Activated B cell treated with CpG ODN at 0.5 μM for 24 hours (primary cell): ENCODE measurements at regions of chr11 and their contacts with region 1.

Region 1: GRCh38 chr11:128290106-128290840 is 297.1 kb downstream of the ETS1 start:
- DNase-seq: peak; percentile 67
- ATAC-seq: peak; percentile 75
- H3K4me3 Mint-ChIP-seq: peak overlapping the region; percentile 85
- H3K27ac Mint-ChIP-seq: peak overlapping the region; percentile 99
- H3K4me1 Mint-ChIP-seq: peaks cover 97% of the 10 kb centered on the region
- H3K27me3 Mint-ChIP-seq: no peaks in the 10 kb centered on the region
- CTCF ChIP-seq: no peak

Region 2: DNA sequence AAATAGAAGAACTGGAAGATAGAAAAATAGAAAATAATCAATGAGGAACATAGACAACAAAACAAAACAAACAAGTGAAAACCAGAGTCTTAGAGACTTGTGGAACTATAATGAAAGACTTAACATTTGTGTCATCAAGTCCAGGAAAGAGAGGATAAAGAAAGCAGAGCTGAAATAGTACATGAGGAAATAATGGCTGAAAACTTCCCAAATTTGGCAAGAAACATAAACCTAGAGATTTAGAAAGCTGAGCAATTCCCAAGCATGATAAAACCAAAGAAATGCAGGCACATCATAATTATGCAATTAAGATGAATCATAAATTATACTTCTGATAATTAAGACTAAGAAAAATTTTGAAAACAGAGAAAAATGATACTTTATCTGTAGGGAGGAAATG is 317.5 kb before region 1 on chr11:
- CTCF ChIA-PET with region 1: no interaction called
- POLR2A ChIA-PET with region 1: no interaction called
- intact Hi-C with region 1: no loop called
- DNase-seq: no peak
- ATAC-seq: no peak
- H3K4me3 Mint-ChIP-seq: no peak overlapping the region
- H3K27ac Mint-ChIP-seq: no peak overlapping the region
- H3K4me1 Mint-ChIP-seq: no peaks in the 10 kb centered on the region
- H3K27me3 Mint-ChIP-seq: peaks cover 8% of the 10 kb centered on the region
- CTCF ChIP-seq: no peak

Region 3: GRCh38 chr11:128172046-128172878 is 118.0 kb before region 1 on chr11:
- CTCF ChIA-PET with region 1: interaction called, 16 read pairs
- POLR2A ChIA-PET with region 1: interaction called, 4 read pairs
- intact Hi-C with region 1: loop called (anchors 1 kb)
- DNase-seq: peak; percentile 65
- ATAC-seq: peak; percentile 79
- H3K4me3 Mint-ChIP-seq: no peak overlapping the region
- H3K27ac Mint-ChIP-seq: no peak overlapping the region
- H3K4me1 Mint-ChIP-seq: peaks cover 5% of the 10 kb centered on the region
- H3K27me3 Mint-ChIP-seq: no peaks in the 10 kb centered on the region
- CTCF ChIP-seq: no peak

Region 4: DNA sequence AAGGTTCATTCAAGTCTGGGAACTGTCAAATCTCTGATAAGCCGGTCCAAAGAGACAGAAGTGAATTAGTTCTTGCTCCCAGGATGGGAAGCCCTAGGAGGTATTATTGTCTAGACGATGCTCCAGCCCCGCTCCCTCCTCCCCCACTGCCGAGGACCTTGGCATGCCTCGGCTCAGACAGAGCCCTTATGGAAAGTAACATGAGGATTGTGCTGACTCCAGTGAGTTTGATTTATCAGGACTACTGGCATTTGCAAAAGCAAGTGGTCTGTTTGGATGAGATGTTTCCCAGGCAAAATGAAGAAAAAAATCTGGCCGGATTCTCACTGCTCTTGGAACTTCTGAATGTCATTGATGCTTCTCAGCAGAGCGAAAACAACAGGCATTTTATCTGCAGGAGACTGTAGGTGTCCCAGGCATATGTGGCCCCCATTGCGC is 43.9 kb before region 1 on chr11:
- CTCF ChIA-PET with region 1: no interaction called
- POLR2A ChIA-PET with region 1: no interaction called
- intact Hi-C with region 1: no loop called
- DNase-seq: no peak
- ATAC-seq: no peak
- H3K4me3 Mint-ChIP-seq: no peak overlapping the region
- H3K27ac Mint-ChIP-seq: no peak overlapping the region
- H3K4me1 Mint-ChIP-seq: no peaks in the 10 kb centered on the region
- H3K27me3 Mint-ChIP-seq: no peaks in the 10 kb centered on the region
- CTCF ChIP-seq: no peak

Region 5: DNA sequence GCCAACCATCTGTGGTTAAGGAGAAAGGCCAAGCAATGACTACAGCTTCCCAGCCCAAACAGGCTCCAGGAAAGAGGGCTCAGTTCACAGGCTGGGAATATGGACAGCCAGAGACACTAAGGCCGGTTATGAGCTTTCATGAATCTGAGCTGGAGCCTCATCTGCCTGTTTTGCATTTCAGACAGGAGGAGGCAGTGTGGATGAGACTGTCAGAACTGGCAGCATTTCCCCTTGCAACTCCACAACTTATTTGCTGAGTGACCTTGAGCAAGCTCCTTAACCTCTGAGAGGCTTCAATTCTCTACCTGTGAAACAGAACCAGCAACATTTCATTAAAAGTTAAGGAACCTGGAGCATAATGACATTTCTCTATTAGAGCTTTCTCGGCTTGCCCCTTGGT is 33.1 kb after region 1 on chr11:
- CTCF ChIA-PET with region 1: interaction called, 26 read pairs
- POLR2A ChIA-PET with region 1: interaction called, 43 read pairs
- intact Hi-C with region 1: loop called (anchors 1 kb)
- DNase-seq: no peak
- ATAC-seq: peak; percentile 25
- H3K4me3 Mint-ChIP-seq: no peak overlapping the region
- H3K27ac Mint-ChIP-seq: peak overlapping the region; percentile 59
- H3K4me1 Mint-ChIP-seq: peaks cover 49% of the 10 kb centered on the region
- H3K27me3 Mint-ChIP-seq: no peaks in the 10 kb centered on the region
- CTCF ChIP-seq: no peak

Region 6: DNA sequence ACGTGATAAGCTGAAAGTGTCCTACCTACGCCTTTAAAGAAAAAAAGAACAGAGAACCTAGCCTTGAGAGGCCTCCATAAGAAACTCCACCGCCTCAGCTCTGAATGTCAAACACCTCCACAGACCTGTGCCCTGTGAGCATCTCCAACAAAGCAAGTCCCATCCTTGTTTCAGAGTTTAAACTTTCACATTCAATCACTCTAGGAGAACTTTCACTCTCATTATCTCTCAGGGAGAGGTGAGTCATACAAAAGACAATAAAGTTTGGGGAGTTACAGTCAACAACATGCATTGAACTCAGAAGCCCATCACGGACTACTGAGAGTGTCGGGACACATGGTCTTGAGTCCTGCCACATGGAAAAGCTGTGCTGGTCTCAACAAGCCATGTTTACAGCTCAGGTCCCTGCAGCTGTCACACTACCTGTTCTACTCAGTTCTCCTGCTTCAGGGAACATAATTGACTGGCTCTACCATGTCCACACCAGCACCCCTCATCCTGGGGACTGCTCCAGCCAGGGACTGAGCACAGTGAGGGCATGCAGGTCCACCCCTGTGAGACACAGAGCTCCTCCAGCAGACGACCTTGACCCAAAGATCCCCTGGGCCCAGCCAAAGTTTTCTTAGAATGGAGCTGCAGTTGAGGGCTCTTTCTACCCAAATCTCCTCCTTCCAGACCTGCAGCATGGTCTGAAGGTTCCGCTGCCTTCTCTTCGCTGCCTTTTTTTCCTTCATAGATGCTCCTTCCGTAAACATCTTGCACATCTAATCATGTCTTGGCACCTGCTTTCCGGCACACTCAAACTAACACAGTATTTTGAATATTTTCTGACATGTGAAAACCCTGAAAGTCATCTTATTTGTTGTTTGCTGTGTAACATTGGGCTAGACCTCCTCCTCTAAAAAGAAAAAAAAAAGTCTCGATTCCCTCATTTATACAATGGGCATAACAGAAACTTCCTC is 182.1 kb after region 1 on chr11:
- CTCF ChIA-PET with region 1: interaction called, 17 read pairs
- POLR2A ChIA-PET with region 1: interaction called, 105 read pairs
- intact Hi-C with region 1: loop called (anchors 1 kb)
- DNase-seq: no peak
- ATAC-seq: peak; percentile 26
- H3K4me3 Mint-ChIP-seq: peak overlapping the region; percentile 60
- H3K27ac Mint-ChIP-seq: peak overlapping the region; percentile 89
- H3K4me1 Mint-ChIP-seq: peaks cover 100% of the 10 kb centered on the region
- H3K27me3 Mint-ChIP-seq: no peaks in the 10 kb centered on the region
- CTCF ChIP-seq: no peak

Region 7: GRCh38 chr11:128506999-128507611 is 216.8 kb after region 1 on chr11:
- CTCF ChIA-PET with region 1: interaction called, 5 read pairs
- POLR2A ChIA-PET with region 1: interaction called, 11 read pairs
- intact Hi-C with region 1: loop called (anchors 1 kb)
- DNase-seq: no peak
- ATAC-seq: peak; percentile 64
- H3K4me3 Mint-ChIP-seq: peak overlapping the region; percentile 74
- H3K27ac Mint-ChIP-seq: peak overlapping the region; percentile 77
- H3K4me1 Mint-ChIP-seq: peaks cover 100% of the 10 kb centered on the region
- H3K27me3 Mint-ChIP-seq: no peaks in the 10 kb centered on the region
- CTCF ChIP-seq: no peak

Region 8: GRCh38 chr11:128565881-128566280 is 275.6 kb after region 1 on chr11:
- CTCF ChIA-PET with region 1: interaction called, 3 read pairs
- POLR2A ChIA-PET with region 1: interaction called, 10 read pairs
- intact Hi-C with region 1: no loop called
- DNase-seq: no peak
- ATAC-seq: no peak
- H3K4me3 Mint-ChIP-seq: no peak overlapping the region
- H3K27ac Mint-ChIP-seq: peak overlapping the region; percentile 68
- H3K4me1 Mint-ChIP-seq: peaks cover 76% of the 10 kb centered on the region
- H3K27me3 Mint-ChIP-seq: no peaks in the 10 kb centered on the region
- CTCF ChIP-seq: no peak

Region 9: DNA sequence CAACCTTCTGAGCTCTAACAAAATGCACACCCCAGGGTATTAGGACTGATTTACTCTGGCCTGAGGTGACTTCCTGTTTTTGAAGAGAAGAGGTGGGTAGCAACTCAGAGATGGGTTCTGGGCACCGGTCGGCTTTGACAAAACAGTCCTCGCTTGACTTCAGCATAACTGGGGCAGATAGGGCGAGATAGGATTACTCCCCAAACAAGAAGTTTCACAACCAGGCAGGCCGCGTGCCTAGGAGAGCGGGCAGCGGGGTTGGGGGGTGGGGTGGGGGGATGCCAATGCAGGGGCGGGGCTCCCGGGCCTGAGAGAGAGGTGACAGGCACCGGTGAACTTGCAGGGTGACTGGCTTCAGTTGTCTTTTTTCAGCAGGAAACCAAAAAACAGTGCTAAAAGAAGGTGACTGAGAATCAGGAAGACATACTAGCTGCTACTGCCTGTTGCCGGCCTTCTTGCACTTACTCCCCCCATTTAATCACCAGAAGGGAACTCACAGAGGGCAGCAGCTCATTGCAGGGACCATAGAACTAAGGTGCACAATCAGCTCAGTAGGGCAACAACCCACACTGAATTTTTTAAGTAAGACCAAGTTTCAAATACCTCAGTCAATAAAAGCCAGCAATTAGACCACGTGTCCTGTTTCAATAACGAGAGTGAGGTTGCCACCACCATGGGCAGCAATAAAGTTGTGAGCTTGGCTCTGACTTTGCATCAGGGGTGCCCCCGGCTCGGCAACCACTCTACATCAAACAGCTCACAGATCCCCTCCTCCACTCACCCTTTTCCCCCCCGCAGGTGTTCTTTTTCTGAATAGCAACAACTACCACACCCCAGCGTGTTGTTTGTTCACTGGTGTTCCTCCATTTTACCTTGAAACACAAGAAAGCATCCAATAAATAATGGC is 334.2 kb after region 1 on chr11:
- CTCF ChIA-PET with region 1: interaction called, 190 read pairs
- POLR2A ChIA-PET with region 1: interaction called, 123 read pairs
- intact Hi-C with region 1: no loop called
- DNase-seq: peak; percentile 64
- ATAC-seq: peak; percentile 82
- H3K4me3 Mint-ChIP-seq: peak overlapping the region; percentile 74
- H3K27ac Mint-ChIP-seq: peak overlapping the region; percentile 99
- H3K4me1 Mint-ChIP-seq: peaks cover 99% of the 10 kb centered on the region
- H3K27me3 Mint-ChIP-seq: no peaks in the 10 kb centered on the region
- CTCF ChIP-seq: no peak

Region 10: GRCh38 chr11:128970598-128971190 is 680.4 kb after region 1 on chr11:
- CTCF ChIA-PET with region 1: no interaction called
- POLR2A ChIA-PET with region 1: no interaction called
- intact Hi-C with region 1: no loop called
- DNase-seq: no peak
- ATAC-seq: no peak
- H3K4me3 Mint-ChIP-seq: no peak overlapping the region
- H3K27ac Mint-ChIP-seq: no peak overlapping the region
- H3K4me1 Mint-ChIP-seq: peaks cover 2% of the 10 kb centered on the region
- H3K27me3 Mint-ChIP-seq: no peaks in the 10 kb centered on the region
- CTCF ChIP-seq: no peak